Heart left ventricle (tissue), 16 donors: ENCODE measurements at regions of chr9 and their contacts with region 1.

Region 1: GRCh38 chr9:73719660-73720059 is 568.0 kb downstream of the ANXA1 start:
- DNase-seq: no peak
- ATAC-seq: no peak
- H3K4me3 ChIP-seq: no peak overlapping the region
- H3K27ac ChIP-seq: no peak overlapping the region
- H3K4me1 ChIP-seq: no peaks in the 10 kb centered on the region
- H3K27me3 ChIP-seq: no peaks in the 10 kb centered on the region
- CTCF ChIP-seq: no peak
- POLR2A ChIP-seq: no peak

Region 2: DNA sequence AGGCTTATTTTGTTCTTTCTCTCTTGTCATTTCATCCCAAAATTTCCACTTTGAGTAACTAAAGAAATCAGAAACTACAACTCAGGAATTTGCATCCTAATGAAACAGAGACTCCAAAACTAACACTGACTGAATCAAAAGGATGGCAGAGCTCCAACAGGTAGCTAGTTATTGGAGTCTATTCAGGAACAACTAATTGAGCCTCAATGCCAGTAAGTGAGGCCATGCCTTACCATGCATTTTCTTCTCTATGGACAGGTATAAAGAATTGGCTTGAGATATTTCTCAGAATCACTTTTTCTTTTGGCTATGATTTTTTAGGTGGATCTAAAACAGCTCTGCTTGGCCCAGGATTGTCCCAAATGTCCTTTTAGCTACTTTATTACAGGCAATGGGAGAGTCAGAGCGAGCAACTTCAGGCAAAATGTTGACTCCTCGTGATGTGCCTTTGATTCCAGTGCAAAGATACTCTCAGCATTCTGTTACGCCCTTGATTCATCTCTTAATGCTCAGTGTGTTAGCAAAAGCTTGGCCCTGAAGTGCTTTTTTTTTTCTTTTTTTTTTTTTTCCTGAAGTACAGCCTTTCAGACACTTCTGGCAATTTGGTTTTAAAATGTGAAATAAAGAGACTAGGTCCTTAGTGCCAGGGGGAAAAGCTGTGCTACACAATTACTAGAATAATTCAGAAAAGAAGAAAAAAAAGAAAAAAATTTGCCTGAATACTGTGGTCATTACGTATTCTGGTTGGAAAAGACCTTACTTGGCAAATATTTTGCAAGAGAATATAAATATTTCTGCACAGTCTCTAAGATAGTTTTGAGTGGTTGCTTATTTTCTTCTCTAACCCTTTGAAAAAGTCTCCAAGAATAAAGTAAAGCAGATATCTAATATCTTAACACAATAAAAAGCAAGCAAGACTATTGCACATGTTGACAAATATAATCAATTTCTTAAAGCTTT is 144.3 kb before region 1 on chr9:
- intact Hi-C with region 1: no loop called
- DNase-seq: no peak
- ATAC-seq: no peak
- H3K4me3 ChIP-seq: no peak overlapping the region
- H3K27ac ChIP-seq: no peak overlapping the region
- H3K4me1 ChIP-seq: no peaks in the 10 kb centered on the region
- H3K27me3 ChIP-seq: no peaks in the 10 kb centered on the region
- CTCF ChIP-seq: no peak
- POLR2A ChIP-seq: no peak

Region 3: GRCh38 chr9:73701415-73702057 is 18.1 kb before region 1 on chr9:
- intact Hi-C with region 1: loop called in 1 of 10 experiments (anchors 2 kb)
- DNase-seq: no peak
- ATAC-seq: no peak
- H3K4me3 ChIP-seq: no peak overlapping the region
- H3K27ac ChIP-seq: no peak overlapping the region
- H3K4me1 ChIP-seq: no peaks in the 10 kb centered on the region
- H3K27me3 ChIP-seq: no peaks in the 10 kb centered on the region
- CTCF ChIP-seq: no peak
- POLR2A ChIP-seq: no peak